Panc1 (cell line): ENCODE measurements at regions of chr10 and their contacts with region 1.

Region 1: GRCh38 chr10:94402015-94402842 is at the start of gene TBC1D12:
- DNase-seq: peak; percentile 92
- ATAC-seq: peak; percentile 89
- H3K4me3 ChIP-seq: peak within 1 kb of the TSS; percentile 71 to 79
- H3K27ac ChIP-seq: peak within 1 kb of the TSS; percentile 92
- H3K4me1 ChIP-seq: peaks cover 30% of the 10 kb centered on the region
- H3K27me3 ChIP-seq: no peaks in the 10 kb centered on the region
- CTCF ChIP-seq: no peak
- total RNA-seq, gene TBC1D12: 23.7 TPM

Region 2: GRCh38 chr10:93723153-93723552 is 679.1 kb before region 1 on chr10:
- CTCF ChIA-PET with region 1: no interaction called
- POLR2A ChIA-PET with region 1: interaction called, 16 read pairs
- in situ Hi-C with region 1: no loop called
- intact Hi-C with region 1: no loop called
- DNase-seq: no peak
- ATAC-seq: no peak
- H3K4me3 ChIP-seq: no peak overlapping the region
- H3K27ac ChIP-seq: no peak overlapping the region
- H3K4me1 ChIP-seq: no peaks in the 10 kb centered on the region
- H3K27me3 ChIP-seq: peaks cover 23% of the 10 kb centered on the region
- CTCF ChIP-seq: no peak

Region 3: DNA sequence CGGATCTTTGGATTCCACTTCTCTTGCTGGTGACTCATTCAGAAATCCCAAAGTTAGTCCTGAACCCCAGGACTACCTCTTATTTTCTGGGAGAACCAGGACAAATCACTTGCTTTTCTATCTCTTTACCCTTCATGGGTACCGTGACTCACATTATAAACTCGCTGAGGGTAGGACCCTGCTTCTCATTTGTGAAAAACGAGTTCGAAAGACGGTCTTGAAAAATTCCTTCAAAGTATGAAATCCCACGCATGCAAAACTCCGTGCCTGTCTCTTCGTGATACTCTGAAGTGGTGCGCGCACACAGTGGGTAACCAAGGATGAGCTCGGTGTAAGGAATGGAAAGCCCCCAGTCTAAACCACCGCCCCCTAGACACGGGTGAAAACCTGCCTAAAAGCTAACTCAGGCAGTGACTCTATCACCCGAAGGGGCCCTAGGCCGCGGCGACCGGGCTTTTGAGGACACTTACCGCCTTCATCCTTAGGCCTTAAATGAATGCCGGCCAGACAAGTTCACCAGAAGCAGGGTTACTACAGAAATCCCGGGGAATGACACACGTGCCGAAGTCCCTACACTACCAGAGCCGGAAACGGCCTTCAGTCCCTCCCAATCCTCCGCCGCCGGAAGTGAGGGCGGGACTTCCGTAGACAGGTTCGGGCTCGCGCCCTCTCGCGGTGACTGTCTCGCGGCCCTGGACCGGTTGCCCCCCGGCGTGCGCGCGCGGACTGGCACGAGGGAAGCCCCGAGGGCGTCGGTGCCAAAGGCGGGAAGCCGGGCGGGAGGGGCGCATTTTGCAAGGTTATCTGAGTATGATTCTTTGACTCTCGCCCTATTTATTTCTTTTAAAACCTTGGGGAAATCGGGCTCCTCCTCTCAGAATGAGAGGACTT is 39.6 kb before region 1 on chr10 and contains the start of gene NOC3L:
- CTCF ChIA-PET with region 1: interaction called, 11 read pairs
- POLR2A ChIA-PET with region 1: interaction called, 11 read pairs
- in situ Hi-C with region 1: no loop called
- intact Hi-C with region 1: loop called (anchors 2 kb)
- DNase-seq: peak; percentile 78
- ATAC-seq: peak; percentile 100
- H3K4me3 ChIP-seq: peak within 1 kb of the TSS; percentile 83 to 86
- H3K27ac ChIP-seq: peak within 1 kb of the TSS; percentile 98
- H3K4me1 ChIP-seq: peaks cover 25% of the 10 kb centered on the region
- H3K27me3 ChIP-seq: no peaks in the 10 kb centered on the region
- CTCF ChIP-seq: peak; percentile 97
- total RNA-seq, gene NOC3L: 41.2 TPM